ENCODE measurements at regions of chr3 and their contacts with region 1.

Region 1: GRCh38 chr3:122484985-122485384 is 29.8 kb downstream of the KPNA1 start:
- DNase-seq: no peak
- ATAC-seq: no peak
- H3K4me3 ChIP-seq: no peak overlapping the region
- H3K4me3 Mint-ChIP-seq: no peak overlapping the region
- H3K27ac ChIP-seq: no peak overlapping the region
- H3K27ac Mint-ChIP-seq: peak overlapping the region in 1 of 9 donors; percentile 41
- H3K4me1 ChIP-seq: peaks cover 0 to 6% of the 10 kb centered on the region in 2 donors
- H3K4me1 Mint-ChIP-seq: peaks cover 16 to 77% (median 60%) of the 10 kb centered on the region in 7 donors
- H3K27me3 ChIP-seq: no peaks in the 10 kb centered on the region
- H3K27me3 Mint-ChIP-seq: no peaks in the 10 kb centered on the region

Region 2: GRCh38 chr3:121690777-121691405 is 794.1 kb before region 1 on chr3:
- CTCF ChIA-PET with region 1: no interaction called
- POLR2A ChIA-PET with region 1: no interaction called
- intact Hi-C with region 1: no loop called
- DNase-seq: no peak
- ATAC-seq: no peak
- H3K4me3 ChIP-seq: no peak overlapping the region
- H3K4me3 Mint-ChIP-seq: peak overlapping the region in 1 of 10 donors; percentile 57
- H3K27ac ChIP-seq: no peak overlapping the region
- H3K27ac Mint-ChIP-seq: peak overlapping the region in 3 of 9 donors; percentile 16 to 72 (median 34)
- H3K4me1 ChIP-seq: no peaks in the 10 kb centered on the region
- H3K4me1 Mint-ChIP-seq: peaks cover 0 to 19% (median 0%) of the 10 kb centered on the region in 7 donors
- H3K27me3 ChIP-seq: no peaks in the 10 kb centered on the region
- H3K27me3 Mint-ChIP-seq: no peaks in the 10 kb centered on the region

Region 3: GRCh38 chr3:122497425-122497824 is 12.4 kb after region 1 on chr3:
- CTCF ChIA-PET with region 1: no interaction called
- POLR2A ChIA-PET with region 1: interaction called, 4 read pairs
- intact Hi-C with region 1: loop called in 1 of 2 experiments (anchors 2 kb)
- DNase-seq: peak in 1 of 9 donors; percentile 40
- ATAC-seq: peak; percentile 90
- H3K4me3 ChIP-seq: no peak overlapping the region
- H3K4me3 Mint-ChIP-seq: no peak overlapping the region
- H3K27ac ChIP-seq: no peak overlapping the region
- H3K27ac Mint-ChIP-seq: peak overlapping the region in 1 of 9 donors; percentile 13
- H3K4me1 ChIP-seq: peaks cover 8 to 22% of the 10 kb centered on the region in 2 donors
- H3K4me1 Mint-ChIP-seq: peaks cover 22 to 69% (median 49%) of the 10 kb centered on the region in 7 donors
- H3K27me3 ChIP-seq: no peaks in the 10 kb centered on the region
- H3K27me3 Mint-ChIP-seq: no peaks in the 10 kb centered on the region

Measured in naive thymus-derived CD4-positive, alpha-beta T cell (primary cell).